ENCODE measurements at regions of chr3 and their contacts with region 1.

Region 1: GRCh38 chr3:34387826-34388564 is 589.6 kb downstream of the PDCD6IP start:
- DNase-seq: peak; percentile 10
- H3K4me3 Mint-ChIP-seq: no peak overlapping the region
- H3K27ac Mint-ChIP-seq: no peak overlapping the region
- H3K4me1 Mint-ChIP-seq: no peaks in the 10 kb centered on the region
- H3K27me3 Mint-ChIP-seq: peaks cover 14% of the 10 kb centered on the region
- CTCF ChIP-seq: no peak

Region 2: DNA sequence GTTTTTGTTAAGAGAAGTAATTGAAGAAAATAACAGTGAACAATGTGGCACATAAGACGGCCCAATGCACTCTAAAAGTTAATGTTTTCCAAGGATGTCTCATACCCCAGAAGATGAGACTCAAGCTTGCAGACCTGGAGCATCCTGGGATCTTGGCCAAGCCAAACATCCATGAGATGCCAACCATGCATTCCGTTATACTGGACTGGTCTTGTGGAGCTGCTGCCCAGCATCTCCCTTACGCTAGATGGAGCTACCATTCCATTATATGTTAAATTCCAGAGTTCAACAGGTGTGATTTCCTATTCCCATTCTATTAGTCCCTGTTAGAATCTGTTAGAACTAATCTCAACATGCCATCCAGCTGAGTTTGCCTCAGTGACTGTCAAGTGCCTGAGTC is 407.7 kb before region 1 on chr3:
- CTCF ChIA-PET with region 1: no interaction called
- POLR2A ChIA-PET with region 1: no interaction called
- intact Hi-C with region 1: loop called (anchors 10 kb)
- DNase-seq: peak; percentile 82
- H3K4me3 Mint-ChIP-seq: no peak overlapping the region
- H3K27ac Mint-ChIP-seq: no peak overlapping the region
- H3K4me1 Mint-ChIP-seq: no peaks in the 10 kb centered on the region
- H3K27me3 Mint-ChIP-seq: peaks cover 40% of the 10 kb centered on the region
- CTCF ChIP-seq: peak; percentile 60

Region 3: DNA sequence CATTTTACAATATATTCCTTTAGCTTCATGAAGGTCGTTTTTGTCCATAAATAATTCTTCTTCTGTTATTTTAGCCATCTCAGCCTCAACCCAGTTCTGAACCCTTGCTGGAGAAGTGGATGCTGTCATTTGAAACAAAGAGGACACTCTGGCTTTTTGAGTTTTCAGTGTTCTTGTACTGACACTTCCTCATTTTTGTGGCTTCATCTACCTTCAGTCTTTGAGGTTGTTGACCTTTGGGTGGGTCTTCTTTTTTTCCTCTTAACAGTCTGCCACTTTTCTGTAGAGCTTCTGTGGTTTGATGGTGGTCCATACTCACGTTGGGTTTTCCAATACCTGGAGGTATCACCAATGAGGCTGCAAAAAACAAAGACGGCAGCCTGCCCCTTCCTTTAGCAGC is 61.3 kb after region 1 on chr3:
- CTCF ChIA-PET with region 1: no interaction called
- POLR2A ChIA-PET with region 1: no interaction called
- intact Hi-C with region 1: no loop called
- DNase-seq: no peak
- H3K4me3 Mint-ChIP-seq: no peak overlapping the region
- H3K27ac Mint-ChIP-seq: no peak overlapping the region
- H3K4me1 Mint-ChIP-seq: no peaks in the 10 kb centered on the region
- H3K27me3 Mint-ChIP-seq: no peaks in the 10 kb centered on the region
- CTCF ChIP-seq: no peak